ENCODE measurements at regions of chr6 and their contacts with region 1.

Region 1: GRCh38 chr6:70107852-70108629 is 194.8 kb downstream of the COL9A1 start:
- DNase-seq: no peak
- ATAC-seq: no peak; the same call in 1 of the 2 replicates
- H3K4me3 Mint-ChIP-seq: no peak overlapping the region
- H3K27ac Mint-ChIP-seq: peak overlapping the region; percentile 57; the same call in 1 of the 2 replicates
- H3K4me1 Mint-ChIP-seq: peaks cover 11% of the 10 kb centered on the region
- H3K27me3 Mint-ChIP-seq: no peaks in the 10 kb centered on the region
- CTCF ChIP-seq: peak; percentile 47

Region 2: GRCh38 chr6:70166088-70166958 is 58.3 kb after region 1 on chr6:
- CTCF ChIA-PET with region 1: interaction called, 16 read pairs
- POLR2A ChIA-PET with region 1: no interaction called
- DNase-seq: peak; percentile 74
- ATAC-seq: peak; percentile 96
- H3K4me3 Mint-ChIP-seq: peak overlapping the region; percentile 60
- H3K27ac Mint-ChIP-seq: no peak overlapping the region
- H3K4me1 Mint-ChIP-seq: peaks cover 4% of the 10 kb centered on the region
- H3K27me3 Mint-ChIP-seq: no peaks in the 10 kb centered on the region; the same call in 1 of the 2 replicates
- CTCF ChIP-seq: no peak; the same call in 1 of the 2 replicates

Measured in WTC11 (cell line).